Activated CD4-positive, alpha-beta memory T cell treated with anti-CD3 and anti-CD28 coated beads, Interleukin-2, amount 10 ng/mL, durations not matched to agents 7 days and 5 days (primary cell): ENCODE measurements at regions of chr3 and their contacts with region 1.

Region 1: GRCh38 chr3:115783938-115784738 is 160.8 kb downstream of the GAP43 start:
- DNase-seq: peak; percentile 87
- H3K4me3 Mint-ChIP-seq: peak overlapping the region; percentile 88
- H3K27ac Mint-ChIP-seq: peak overlapping the region; percentile 93
- H3K4me1 Mint-ChIP-seq: peaks cover 21% of the 10 kb centered on the region
- H3K27me3 Mint-ChIP-seq: peaks cover 4% of the 10 kb centered on the region

Region 2: GRCh38 chr3:115147329-115148141 is 636.6 kb before region 1 on chr3:
- CTCF ChIA-PET with region 1: interaction called, 10 read pairs
- POLR2A ChIA-PET with region 1: interaction called, 10 read pairs
- DNase-seq: peak; percentile 97
- H3K4me3 Mint-ChIP-seq: peak overlapping the region; percentile 87
- H3K27ac Mint-ChIP-seq: peak overlapping the region; percentile 95
- H3K4me1 Mint-ChIP-seq: peaks cover 19% of the 10 kb centered on the region
- H3K27me3 Mint-ChIP-seq: no peaks in the 10 kb centered on the region

Region 3: DNA sequence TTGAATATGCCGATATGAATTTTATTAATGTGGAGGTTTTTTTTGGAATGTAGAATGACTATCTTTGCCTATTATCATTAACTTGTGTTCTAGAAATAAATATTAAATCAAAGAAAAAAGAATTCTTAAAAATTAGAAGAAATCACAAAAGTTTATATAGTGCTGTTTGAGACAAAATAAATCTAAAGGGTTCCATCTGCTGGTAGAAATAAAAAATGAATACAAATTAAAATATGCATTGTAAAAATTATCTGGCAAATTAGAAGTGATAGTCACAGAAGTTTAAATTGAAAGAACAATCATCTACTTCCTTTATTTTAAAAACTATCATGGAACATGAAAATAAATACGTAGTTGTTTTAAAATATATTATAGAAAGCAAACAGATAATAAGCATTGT is 614.3 kb before region 1 on chr3:
- CTCF ChIA-PET with region 1: interaction called, 6 read pairs
- POLR2A ChIA-PET with region 1: interaction called, 10 read pairs
- DNase-seq: no peak
- H3K4me3 Mint-ChIP-seq: no peak overlapping the region
- H3K27ac Mint-ChIP-seq: no peak overlapping the region
- H3K4me1 Mint-ChIP-seq: peaks cover 12% of the 10 kb centered on the region
- H3K27me3 Mint-ChIP-seq: no peaks in the 10 kb centered on the region

Region 4: DNA sequence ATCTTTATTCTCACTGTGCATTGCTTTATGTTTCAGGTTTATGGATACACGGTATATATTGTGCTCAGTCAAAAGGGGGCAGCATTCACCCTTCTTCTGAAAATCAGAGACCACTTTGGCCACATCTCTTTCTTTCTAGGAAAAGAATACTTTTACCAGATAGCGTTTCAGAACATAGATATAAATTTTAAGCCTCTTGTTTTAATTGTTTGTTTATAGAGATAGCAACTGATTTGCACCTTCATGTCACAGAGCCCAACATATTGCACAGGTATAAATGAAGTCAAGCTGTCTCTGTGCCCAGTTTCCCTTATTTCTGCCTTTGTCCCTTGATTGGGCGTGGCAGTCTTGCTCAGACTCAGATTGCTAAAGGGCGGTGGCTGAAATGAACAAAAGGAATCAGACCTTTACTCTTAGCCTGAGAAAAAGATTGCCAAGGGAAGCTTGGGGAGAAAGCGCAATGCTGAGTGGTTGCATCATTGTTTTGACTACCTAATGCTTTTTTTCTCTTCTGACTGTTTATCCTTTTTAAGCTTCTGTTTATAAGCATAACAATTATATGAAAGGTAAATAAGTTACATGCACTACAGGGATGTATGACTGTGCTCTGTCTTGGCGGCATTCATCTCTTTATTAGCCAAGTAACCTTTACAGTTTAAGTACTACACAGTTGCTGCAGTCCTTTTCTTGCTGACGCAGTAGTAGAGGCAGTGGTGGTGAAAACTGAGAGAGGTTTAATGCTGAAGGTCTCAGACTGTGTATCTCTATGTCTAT is 566.3 kb before region 1 on chr3:
- CTCF ChIA-PET with region 1: interaction called, 10 read pairs
- POLR2A ChIA-PET with region 1: no interaction called
- DNase-seq: no peak
- H3K4me3 Mint-ChIP-seq: no peak overlapping the region
- H3K27ac Mint-ChIP-seq: no peak overlapping the region
- H3K4me1 Mint-ChIP-seq: peaks cover 2% of the 10 kb centered on the region
- H3K27me3 Mint-ChIP-seq: peaks cover 3% of the 10 kb centered on the region

Region 5: DNA sequence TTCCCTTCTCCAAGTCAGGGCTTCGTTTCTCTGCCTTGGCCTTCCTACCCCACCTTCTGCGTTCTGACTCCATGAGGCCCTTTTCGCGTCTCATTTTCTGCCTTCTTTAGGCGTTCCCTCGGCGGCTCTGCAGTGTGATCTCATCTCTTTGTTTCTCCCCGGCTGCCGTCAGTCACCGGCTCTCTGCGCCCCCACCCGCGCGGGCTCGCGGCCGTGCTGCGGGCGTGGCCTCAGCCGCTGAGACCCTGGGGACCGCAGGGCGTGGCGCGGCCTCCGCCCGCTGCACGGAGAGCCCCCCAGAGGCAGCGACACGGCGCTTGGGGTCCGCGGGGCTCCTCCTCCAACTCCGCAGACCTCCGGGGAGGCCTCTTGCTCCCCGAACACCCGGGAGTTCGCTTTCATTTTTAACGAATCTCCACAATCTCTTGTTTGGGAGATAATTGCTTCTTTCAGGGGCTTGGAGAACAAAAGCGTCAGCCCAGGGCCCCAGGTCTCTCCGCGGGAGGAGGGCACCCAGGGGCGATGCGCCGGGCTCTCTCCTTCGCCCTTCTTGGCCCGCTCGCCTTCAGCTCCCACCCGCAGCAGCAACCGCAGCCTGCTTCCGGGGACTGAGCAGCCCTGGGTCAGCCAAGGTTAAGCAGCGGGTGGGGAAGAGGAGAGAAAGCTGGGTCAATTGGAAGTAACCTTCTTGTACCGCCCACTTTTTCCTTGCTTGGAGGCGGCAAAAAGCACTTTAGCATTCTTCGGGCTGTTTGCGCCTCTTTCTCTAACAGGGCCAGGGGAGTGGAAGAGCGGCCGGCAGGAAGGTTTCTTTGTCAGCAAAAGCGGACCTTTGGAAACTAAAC is 125.6 kb before region 1 on chr3:
- CTCF ChIA-PET with region 1: interaction called, 10 read pairs
- POLR2A ChIA-PET with region 1: interaction called, 3 read pairs
- DNase-seq: peak; percentile 77
- H3K4me3 Mint-ChIP-seq: peak overlapping the region; percentile 92
- H3K27ac Mint-ChIP-seq: peak overlapping the region; percentile 91
- H3K4me1 Mint-ChIP-seq: peaks cover 24% of the 10 kb centered on the region
- H3K27me3 Mint-ChIP-seq: peaks cover 2% of the 10 kb centered on the region

Region 6: DNA sequence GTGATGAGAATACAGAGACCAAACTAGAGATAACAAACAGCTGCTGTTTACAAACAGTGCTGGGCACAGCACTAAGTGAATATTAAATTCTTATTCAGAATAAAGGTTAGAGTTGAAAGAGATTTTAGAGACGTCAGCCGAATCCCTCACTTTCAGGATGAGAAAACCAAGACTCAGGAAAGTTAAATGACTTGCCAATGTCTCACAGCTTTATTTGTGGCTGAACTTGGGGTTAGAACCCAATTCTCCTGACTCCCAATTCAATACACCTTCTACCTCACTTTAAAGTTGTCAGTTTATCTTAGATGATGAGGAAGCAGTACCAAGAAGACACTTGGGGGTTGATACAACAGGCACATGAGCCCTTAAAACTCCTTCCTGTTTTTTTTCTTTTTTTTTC is 20.1 kb after region 1 on chr3:
- CTCF ChIA-PET with region 1: interaction called, 12 read pairs
- POLR2A ChIA-PET with region 1: interaction called, 3 read pairs
- DNase-seq: no peak
- H3K4me3 Mint-ChIP-seq: no peak overlapping the region
- H3K27ac Mint-ChIP-seq: no peak overlapping the region
- H3K4me1 Mint-ChIP-seq: peaks cover 15% of the 10 kb centered on the region
- H3K27me3 Mint-ChIP-seq: peaks cover 36% of the 10 kb centered on the region

Region 7: GRCh38 chr3:115814778-115815380 is 30.7 kb after region 1 on chr3:
- CTCF ChIA-PET with region 1: interaction called, 38 read pairs
- POLR2A ChIA-PET with region 1: interaction called, 5 read pairs
- DNase-seq: peak; percentile 68
- H3K4me3 Mint-ChIP-seq: no peak overlapping the region
- H3K27ac Mint-ChIP-seq: no peak overlapping the region
- H3K4me1 Mint-ChIP-seq: no peaks in the 10 kb centered on the region
- H3K27me3 Mint-ChIP-seq: peaks cover 21% of the 10 kb centered on the region

Region 8: GRCh38 chr3:115891006-115891636 is 107.0 kb after region 1 on chr3:
- CTCF ChIA-PET with region 1: no interaction called
- POLR2A ChIA-PET with region 1: no interaction called
- DNase-seq: no peak
- H3K4me3 Mint-ChIP-seq: no peak overlapping the region
- H3K27ac Mint-ChIP-seq: no peak overlapping the region
- H3K4me1 Mint-ChIP-seq: no peaks in the 10 kb centered on the region
- H3K27me3 Mint-ChIP-seq: peaks cover 2% of the 10 kb centered on the region

Region 9: DNA sequence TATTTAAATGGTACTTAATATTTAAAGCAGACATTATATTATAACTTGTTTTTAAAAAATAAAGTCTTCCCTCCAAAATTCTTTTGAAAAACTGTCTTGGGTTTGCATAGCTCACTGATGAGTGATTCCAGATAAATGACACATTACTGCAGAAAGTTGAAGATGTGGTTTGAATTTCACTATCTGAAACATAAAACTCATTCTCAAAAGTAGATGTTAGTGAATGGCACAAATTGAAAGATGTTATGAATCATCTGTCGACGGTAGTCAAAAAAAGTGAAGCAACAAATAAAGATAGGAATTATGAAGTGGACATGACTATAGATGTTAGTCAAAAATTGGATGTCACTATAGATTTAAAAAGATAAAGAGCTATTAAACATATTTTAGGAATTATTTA is 119.7 kb after region 1 on chr3:
- CTCF ChIA-PET with region 1: no interaction called
- POLR2A ChIA-PET with region 1: no interaction called
- DNase-seq: no peak
- H3K4me3 Mint-ChIP-seq: no peak overlapping the region
- H3K27ac Mint-ChIP-seq: no peak overlapping the region
- H3K4me1 Mint-ChIP-seq: no peaks in the 10 kb centered on the region
- H3K27me3 Mint-ChIP-seq: peaks cover 3% of the 10 kb centered on the region

Region 10: DNA sequence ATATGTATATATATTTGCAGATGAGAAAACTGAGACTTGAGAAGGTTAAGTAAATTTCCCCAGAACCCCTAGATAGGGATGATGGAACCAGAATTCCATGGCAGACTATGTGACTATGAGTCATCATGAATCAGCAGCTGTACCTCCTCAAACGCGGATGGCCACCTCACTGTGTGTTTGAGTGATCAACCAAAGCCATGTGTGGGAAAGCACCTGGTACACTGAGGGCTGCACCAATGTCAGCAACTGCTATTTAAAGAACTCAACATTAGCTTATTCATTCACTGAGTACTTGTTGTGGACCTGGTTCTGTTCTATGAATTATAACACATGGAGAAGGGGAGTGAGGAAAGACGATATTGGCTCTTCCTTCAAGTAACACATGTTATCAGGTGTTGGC is 216.2 kb after region 1 on chr3:
- CTCF ChIA-PET with region 1: no interaction called
- POLR2A ChIA-PET with region 1: no interaction called
- DNase-seq: no peak
- H3K4me3 Mint-ChIP-seq: no peak overlapping the region
- H3K27ac Mint-ChIP-seq: no peak overlapping the region
- H3K4me1 Mint-ChIP-seq: no peaks in the 10 kb centered on the region
- H3K27me3 Mint-ChIP-seq: no peaks in the 10 kb centered on the region